ENCODE measurements at regions of chr13 and their contacts with region 1.

Region 1: DNA sequence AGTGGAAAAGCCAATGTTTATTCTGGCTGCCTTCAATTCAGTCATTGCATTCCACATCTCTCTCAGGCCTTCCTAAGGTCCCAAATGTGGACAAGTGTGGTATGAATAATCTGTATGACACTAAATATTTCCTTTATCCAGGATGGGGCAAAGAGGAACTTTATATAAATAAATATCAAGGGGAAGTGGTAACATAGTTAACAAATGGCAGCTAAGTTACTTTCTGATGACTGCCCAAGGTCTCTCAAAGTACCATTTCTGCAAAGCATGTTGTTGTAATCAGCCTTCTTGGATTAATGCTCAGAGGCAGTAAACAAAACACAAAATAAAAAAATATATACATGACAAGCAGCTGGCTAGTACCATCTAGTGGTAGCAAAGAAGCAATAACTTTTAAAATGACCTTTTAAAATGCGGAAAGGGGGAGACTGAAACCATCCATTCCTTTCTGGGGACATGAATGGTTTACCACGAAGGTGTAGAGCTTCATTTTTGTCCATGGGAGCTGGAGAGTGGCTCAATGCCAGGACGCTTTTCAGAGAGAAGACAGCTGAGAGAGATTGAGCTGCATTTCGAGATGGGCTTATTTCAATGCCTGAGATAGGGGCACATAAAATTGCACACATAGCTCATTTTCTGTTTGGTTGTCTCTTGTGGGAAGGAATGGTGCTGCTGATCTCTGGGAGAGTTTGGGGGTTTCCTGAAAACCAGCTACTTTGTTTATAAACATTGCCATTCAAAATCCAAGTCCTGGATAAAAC is 259.2 kb downstream of the RFC3 start:
- DNase-seq: peak; percentile 20
- H3K4me3 Mint-ChIP-seq: no peak overlapping the region
- H3K27ac Mint-ChIP-seq: no peak overlapping the region
- H3K4me1 Mint-ChIP-seq: no peaks in the 10 kb centered on the region
- H3K27me3 Mint-ChIP-seq: no peaks in the 10 kb centered on the region
- CTCF ChIP-seq: peak; percentile 72

Region 2: GRCh38 chr13:33799950-33800592 is 277.1 kb before region 1 on chr13:
- CTCF ChIA-PET with region 1: interaction called, 35 read pairs
- POLR2A ChIA-PET with region 1: interaction called, 5 read pairs
- intact Hi-C with region 1: loop called (anchors 1 kb)
- DNase-seq: peak; percentile 18
- H3K4me3 Mint-ChIP-seq: no peak overlapping the region
- H3K27ac Mint-ChIP-seq: no peak overlapping the region
- H3K4me1 Mint-ChIP-seq: peaks cover 12% of the 10 kb centered on the region
- H3K27me3 Mint-ChIP-seq: no peaks in the 10 kb centered on the region
- CTCF ChIP-seq: peak; percentile 12

Region 3: GRCh38 chr13:33931397-33932311 is 145.5 kb before region 1 on chr13:
- CTCF ChIA-PET with region 1: interaction called, 112 read pairs
- POLR2A ChIA-PET with region 1: interaction called, 4 read pairs
- intact Hi-C with region 1: loop called (anchors 1 kb)
- DNase-seq: peak; percentile 71
- H3K4me3 Mint-ChIP-seq: no peak overlapping the region
- H3K27ac Mint-ChIP-seq: no peak overlapping the region
- H3K4me1 Mint-ChIP-seq: no peaks in the 10 kb centered on the region
- H3K27me3 Mint-ChIP-seq: no peaks in the 10 kb centered on the region
- CTCF ChIP-seq: peak; percentile 56

Region 4: DNA sequence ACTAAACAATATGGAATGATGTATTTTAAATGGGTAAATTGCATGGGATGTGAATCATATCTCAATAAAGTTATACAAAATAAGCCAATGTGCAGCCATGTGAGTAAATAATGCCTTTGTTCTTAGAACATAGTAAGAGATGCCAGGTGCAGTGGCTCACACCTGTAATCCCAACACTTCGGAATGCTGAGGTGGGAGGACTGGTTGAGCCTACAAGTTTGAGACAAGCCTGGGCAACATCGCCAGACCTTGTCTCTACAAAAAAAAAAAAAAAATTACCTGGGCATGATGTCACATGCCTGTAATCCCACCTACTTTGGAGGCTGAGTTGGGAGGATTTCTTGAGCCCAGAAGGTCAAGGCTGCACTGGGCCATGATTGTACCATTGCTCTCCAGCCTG is 28.5 kb before region 1 on chr13:
- CTCF ChIA-PET with region 1: no interaction called
- POLR2A ChIA-PET with region 1: no interaction called
- intact Hi-C with region 1: no loop called
- DNase-seq: peak; percentile 40
- H3K4me3 Mint-ChIP-seq: no peak overlapping the region
- H3K27ac Mint-ChIP-seq: no peak overlapping the region
- H3K4me1 Mint-ChIP-seq: peaks cover 14% of the 10 kb centered on the region
- H3K27me3 Mint-ChIP-seq: no peaks in the 10 kb centered on the region
- CTCF ChIP-seq: no peak

Region 5: DNA sequence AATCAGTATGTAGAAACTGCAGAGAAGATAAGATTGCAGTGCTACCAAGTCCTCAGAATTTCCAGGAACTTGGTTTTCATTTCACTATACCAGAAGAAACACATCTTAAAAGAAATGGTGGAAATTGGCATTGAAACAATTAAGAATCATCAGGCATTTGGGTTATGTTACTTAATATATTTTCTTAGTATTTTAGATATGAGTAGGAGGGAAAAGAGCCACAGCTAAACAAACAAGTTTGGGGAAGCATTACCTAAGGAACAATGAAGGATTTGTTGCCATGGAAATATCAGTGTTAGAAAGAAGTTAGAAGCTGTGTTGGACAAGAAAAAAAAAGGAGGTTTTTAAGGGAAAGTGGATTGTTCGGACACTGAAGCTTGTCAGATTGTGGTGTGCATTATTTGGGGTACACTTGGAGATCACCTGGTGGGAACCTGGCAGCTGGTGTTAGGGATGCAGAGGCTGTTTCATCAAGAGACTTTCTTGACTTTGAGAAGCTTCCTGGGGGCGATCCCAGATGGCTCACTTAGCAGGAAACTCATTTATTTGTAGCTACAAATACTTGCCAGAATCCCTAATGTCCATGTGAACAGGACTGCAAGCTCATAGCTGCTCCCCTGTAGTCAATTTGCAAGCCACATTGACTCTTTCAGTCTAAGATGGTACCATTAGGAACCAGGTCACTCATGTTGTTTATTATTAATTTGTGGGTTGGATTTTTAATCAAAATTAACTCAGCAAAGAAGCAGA is 12.5 kb before region 1 on chr13:
- CTCF ChIA-PET with region 1: interaction called, 18 read pairs
- POLR2A ChIA-PET with region 1: no interaction called
- intact Hi-C with region 1: no loop called
- DNase-seq: no peak
- H3K4me3 Mint-ChIP-seq: no peak overlapping the region
- H3K27ac Mint-ChIP-seq: no peak overlapping the region
- H3K4me1 Mint-ChIP-seq: peaks cover 22% of the 10 kb centered on the region
- H3K27me3 Mint-ChIP-seq: no peaks in the 10 kb centered on the region
- CTCF ChIP-seq: no peak

Region 6: DNA sequence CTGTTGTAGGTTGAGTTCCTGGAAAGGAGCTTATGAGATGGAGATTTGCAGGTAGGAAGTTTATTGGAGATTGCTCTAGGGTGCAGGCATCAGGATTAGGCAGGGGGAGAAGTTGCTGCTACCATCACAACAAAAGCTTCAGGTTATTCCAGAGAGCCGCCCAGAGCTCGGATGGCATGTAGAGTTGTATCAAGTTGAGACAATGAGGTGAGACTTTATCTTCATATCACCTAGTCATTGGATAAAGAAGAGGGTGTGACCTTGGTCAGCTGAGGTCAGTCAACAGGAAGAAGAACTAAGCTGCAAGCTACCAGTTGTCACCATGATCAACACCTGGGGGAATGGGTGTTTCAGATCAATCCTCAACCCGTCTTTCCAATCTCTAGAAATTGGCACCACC is 82.8 kb after region 1 on chr13:
- CTCF ChIA-PET with region 1: no interaction called
- POLR2A ChIA-PET with region 1: no interaction called
- intact Hi-C with region 1: no loop called
- DNase-seq: no peak
- H3K4me3 Mint-ChIP-seq: no peak overlapping the region
- H3K27ac Mint-ChIP-seq: no peak overlapping the region
- H3K4me1 Mint-ChIP-seq: peaks cover 34% of the 10 kb centered on the region
- H3K27me3 Mint-ChIP-seq: no peaks in the 10 kb centered on the region
- CTCF ChIP-seq: no peak

Region 7: DNA sequence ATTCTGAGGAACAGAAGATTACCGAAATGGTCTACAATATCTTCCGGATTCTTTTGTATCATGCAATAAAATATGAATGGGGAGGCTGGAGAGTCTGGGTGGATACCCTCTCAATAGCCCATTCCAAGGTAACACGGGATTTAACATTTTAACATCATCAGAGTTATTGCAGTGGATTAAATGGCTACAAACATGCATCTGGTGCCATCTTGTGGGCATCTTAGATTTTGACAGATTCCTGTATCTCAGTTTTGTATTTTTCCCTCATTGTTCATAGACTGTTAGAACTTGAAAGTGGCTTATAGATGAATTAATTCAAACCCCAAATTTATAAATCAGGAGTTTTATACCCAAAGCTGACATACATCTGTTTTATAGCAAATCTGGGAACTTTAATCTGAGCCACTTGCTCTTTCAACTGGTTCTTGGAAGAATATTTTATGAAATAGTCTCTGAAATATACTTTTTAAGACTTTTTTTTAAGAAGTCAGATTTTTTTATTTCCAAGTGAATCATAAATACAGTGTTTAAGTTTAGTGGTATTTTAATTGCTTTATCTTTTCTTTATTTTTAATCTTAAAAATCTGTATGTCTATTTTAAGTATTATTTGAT is 1080.1 kb after region 1 on chr13:
- CTCF ChIA-PET with region 1: interaction called, 14 read pairs
- POLR2A ChIA-PET with region 1: no interaction called
- intact Hi-C with region 1: loop called (anchors 1 kb)
- DNase-seq: peak; percentile 73
- H3K4me3 Mint-ChIP-seq: no peak overlapping the region
- H3K27ac Mint-ChIP-seq: no peak overlapping the region
- H3K4me1 Mint-ChIP-seq: no peaks in the 10 kb centered on the region
- H3K27me3 Mint-ChIP-seq: no peaks in the 10 kb centered on the region
- CTCF ChIP-seq: peak; percentile 57

Measured in MCF 10A (cell line).